A673 (cell line): ENCODE measurements at regions of chr11 and their contacts with region 1.

Region 1: GRCh38 chr11:75214411-75214821 is 26.2 kb upstream of the TPBGL start:
- DNase-seq: peak; percentile 91
- H3K4me3 ChIP-seq: no peak overlapping the region
- H3K27ac ChIP-seq: no peak overlapping the region
- H3K4me1 ChIP-seq: no peaks in the 10 kb centered on the region
- H3K27me3 ChIP-seq: peaks cover 8% of the 10 kb centered on the region
- CTCF ChIP-seq: peak; percentile 60

Region 2: DNA sequence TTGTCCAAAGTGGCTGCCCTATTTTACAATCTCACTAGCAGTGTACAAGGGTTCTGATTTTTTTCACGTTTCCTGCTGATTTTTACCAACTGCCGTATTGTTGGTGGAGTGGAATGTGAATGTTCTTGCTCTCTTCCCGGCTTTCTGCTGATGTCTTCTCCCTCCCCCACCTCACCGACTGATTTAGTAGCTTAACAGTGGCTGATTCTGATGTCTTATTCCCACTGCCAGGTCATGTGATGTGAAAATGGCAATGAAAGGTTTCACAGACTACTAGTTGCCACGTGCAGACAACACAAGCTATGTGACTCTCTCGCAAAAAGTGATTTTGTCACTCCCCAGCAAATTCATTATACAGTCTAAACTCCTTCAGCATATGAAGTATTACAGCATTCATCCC is 243.0 kb before region 1 on chr11:
- CTCF ChIA-PET with region 1: no interaction called
- POLR2A ChIA-PET with region 1: no interaction called
- intact Hi-C with region 1: no loop called
- DNase-seq: no peak
- H3K4me3 ChIP-seq: no peak overlapping the region
- H3K27ac ChIP-seq: no peak overlapping the region
- H3K4me1 ChIP-seq: no peaks in the 10 kb centered on the region
- H3K27me3 ChIP-seq: no peaks in the 10 kb centered on the region
- CTCF ChIP-seq: no peak

Region 3: GRCh38 chr11:75063732-75064314 is 150.6 kb before region 1 on chr11:
- CTCF ChIA-PET with region 1: no interaction called
- POLR2A ChIA-PET with region 1: no interaction called
- intact Hi-C with region 1: no loop called
- DNase-seq: no peak
- H3K4me3 ChIP-seq: no peak overlapping the region
- H3K27ac ChIP-seq: no peak overlapping the region
- H3K4me1 ChIP-seq: no peaks in the 10 kb centered on the region
- H3K27me3 ChIP-seq: peaks cover 9% of the 10 kb centered on the region
- CTCF ChIP-seq: no peak

Region 4: DNA sequence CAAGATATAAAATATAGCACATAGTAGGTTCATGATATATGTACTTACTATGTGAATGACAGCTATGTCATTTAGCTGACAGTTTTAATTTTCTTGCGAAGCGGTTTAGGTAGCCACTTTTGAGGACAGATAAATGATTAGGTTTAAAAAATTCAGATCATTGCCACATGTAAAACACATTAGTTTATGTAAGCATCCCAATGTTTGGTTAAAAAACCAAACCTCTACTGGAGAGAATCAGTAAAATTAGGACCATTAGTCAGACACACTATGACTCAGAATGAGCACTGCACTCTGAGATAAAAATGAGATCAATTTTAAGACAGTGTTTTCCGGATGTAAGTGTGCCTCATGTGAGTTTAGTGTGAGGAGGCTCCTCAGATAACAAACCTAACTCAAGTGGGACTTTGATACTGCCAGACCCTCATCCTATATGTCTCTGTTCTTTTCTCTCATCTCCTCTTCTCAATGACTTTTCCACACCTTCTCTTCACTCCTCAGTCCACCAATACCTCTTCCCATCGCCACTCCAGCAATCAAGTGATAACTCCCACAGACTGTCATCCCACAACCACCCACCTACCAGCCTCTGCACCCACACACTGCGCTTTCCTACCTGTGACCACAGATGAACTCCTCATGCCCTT is 110.9 kb before region 1 on chr11:
- CTCF ChIA-PET with region 1: no interaction called
- POLR2A ChIA-PET with region 1: no interaction called
- intact Hi-C with region 1: no loop called
- DNase-seq: peak; percentile 12
- H3K4me3 ChIP-seq: no peak overlapping the region
- H3K27ac ChIP-seq: no peak overlapping the region
- H3K4me1 ChIP-seq: no peaks in the 10 kb centered on the region
- H3K27me3 ChIP-seq: peaks cover 3% of the 10 kb centered on the region
- CTCF ChIP-seq: no peak

Region 5: DNA sequence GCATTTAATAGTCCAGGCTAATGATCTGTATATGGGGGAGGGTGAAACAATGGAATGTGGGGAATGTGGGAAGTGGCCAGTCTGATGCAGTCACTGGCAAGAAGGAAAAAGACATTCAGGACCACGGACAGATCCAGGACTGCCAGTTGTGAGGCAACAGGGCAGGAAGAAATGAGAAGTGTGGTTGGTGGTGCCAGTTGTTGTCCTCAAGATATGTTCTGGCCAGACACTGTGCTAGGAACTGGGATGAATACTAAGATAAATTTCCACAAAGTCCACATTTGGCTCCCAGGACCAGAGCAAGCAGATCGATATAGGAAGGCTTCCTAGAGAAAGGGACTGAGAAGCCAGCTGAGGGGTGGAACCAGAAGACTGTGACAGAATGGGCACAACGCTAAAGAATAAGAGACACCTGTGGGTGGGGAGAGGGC is 19.3 kb after region 1 on chr11:
- CTCF ChIA-PET with region 1: no interaction called
- POLR2A ChIA-PET with region 1: no interaction called
- intact Hi-C with region 1: loop called (anchors 1 kb)
- DNase-seq: peak; percentile 70
- H3K4me3 ChIP-seq: no peak overlapping the region
- H3K27ac ChIP-seq: no peak overlapping the region
- H3K4me1 ChIP-seq: no peaks in the 10 kb centered on the region
- H3K27me3 ChIP-seq: no peaks in the 10 kb centered on the region
- CTCF ChIP-seq: no peak

Region 6: GRCh38 chr11:75241036-75241905 is 26.9 kb after region 1 on chr11:
- CTCF ChIA-PET with region 1: interaction called, 13 read pairs
- POLR2A ChIA-PET with region 1: no interaction called
- intact Hi-C with region 1: no loop called
- DNase-seq: peak; percentile 92
- H3K4me3 ChIP-seq: peak overlapping the region; percentile 49
- H3K27ac ChIP-seq: no peak overlapping the region
- H3K4me1 ChIP-seq: no peaks in the 10 kb centered on the region
- H3K27me3 ChIP-seq: peaks cover 43% of the 10 kb centered on the region
- CTCF ChIP-seq: peak; percentile 65